HEK293 (cell line): ENCODE measurements at regions of chr2 and their contacts with region 1.

Region 1: DNA sequence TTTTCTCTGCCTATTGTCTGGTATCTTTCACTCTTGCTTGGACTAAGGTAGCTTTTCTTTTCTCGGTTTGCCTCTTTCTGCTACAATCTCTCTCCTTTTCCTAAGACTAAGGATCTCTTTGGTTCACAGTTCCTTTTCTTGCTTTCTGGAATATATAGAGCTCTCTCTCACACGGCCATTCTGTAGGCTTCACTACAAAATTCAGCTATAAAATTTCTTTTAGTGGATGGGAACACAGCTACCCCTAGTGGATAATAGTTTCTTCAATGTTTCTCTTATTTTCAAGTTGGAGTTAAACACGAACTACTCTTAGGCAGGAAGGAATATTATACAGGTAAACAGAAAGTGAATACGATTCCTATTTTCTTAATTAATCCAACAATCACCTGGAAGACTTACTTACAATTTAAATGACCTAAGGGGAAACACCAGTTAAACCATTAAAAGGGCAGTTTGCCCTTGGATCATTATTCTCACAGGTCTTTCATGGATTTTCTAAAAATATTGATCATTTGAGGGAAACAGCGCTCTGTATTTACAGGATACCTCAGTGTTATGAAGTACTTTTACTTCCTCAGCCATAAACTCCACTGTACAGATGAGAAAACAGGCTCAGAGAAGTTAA is 140.5 kb downstream of the LRP2 start:
- H3K4me3 ChIP-seq: no peak overlapping the region
- H3K27ac ChIP-seq: no peak overlapping the region
- H3K4me1 ChIP-seq: no peaks in the 10 kb centered on the region
- CTCF ChIP-seq: peak; percentile 26; the same call in 1 of the 2 replicates

Region 2: GRCh38 chr2:168490015-168490874 is 731.6 kb before region 1 on chr2:
- CTCF ChIA-PET with region 1: no interaction called
- POLR2A ChIA-PET with region 1: no interaction called
- H3K4me3 ChIP-seq: no peak overlapping the region
- H3K27ac ChIP-seq: no peak overlapping the region
- H3K4me1 ChIP-seq: peaks cover 3% of the 10 kb centered on the region; the same call in 1 of the 2 replicates
- CTCF ChIP-seq: no peak

Region 3: GRCh38 chr2:169208026-169208425 is 13.8 kb before region 1 on chr2:
- CTCF ChIA-PET with region 1: interaction called, 29 read pairs
- POLR2A ChIA-PET with region 1: no interaction called
- H3K4me3 ChIP-seq: no peak overlapping the region
- H3K27ac ChIP-seq: no peak overlapping the region
- H3K4me1 ChIP-seq: no peaks in the 10 kb centered on the region
- CTCF ChIP-seq: no peak

Region 4: DNA sequence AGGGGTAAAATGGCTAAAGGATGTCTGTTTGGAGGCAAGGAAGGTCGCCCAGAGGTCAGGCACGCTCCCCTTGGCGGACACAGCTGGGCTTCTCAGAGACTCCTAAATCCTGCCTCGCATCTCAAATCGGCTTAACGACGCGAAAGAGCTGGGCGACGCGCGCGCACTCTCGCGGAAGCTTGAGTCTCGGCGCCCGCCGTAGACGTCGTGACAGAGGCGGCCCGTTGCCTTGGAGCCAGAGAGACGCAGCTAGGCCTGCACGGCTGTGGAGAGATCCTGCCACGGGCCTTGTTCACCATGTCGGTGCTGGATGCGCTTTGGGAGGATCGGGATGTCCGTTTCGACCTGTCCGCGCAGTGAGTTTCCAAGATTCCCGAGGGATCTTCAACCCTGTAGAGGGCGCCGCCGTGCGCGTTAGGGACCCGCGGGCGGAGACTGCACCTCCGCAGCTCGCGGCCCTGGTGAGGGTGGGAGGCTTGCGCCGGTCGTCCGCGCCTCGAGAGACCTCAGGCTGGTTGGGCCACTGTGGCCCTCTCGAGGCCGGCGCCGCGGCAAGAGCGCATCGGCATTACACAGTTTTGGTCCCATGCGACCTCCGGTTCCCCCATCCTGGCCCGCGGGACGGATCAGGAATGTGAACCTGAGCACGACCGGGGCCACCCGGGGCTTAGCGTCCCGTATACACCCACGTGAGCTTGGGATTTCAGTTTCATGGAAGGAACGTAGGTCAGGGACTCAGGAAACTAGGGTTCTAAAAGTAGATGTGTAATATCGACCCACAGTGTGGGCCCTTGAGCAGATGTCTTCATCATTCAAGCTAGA is 257.6 kb after region 1 on chr2 and contains the start of gene BBS5:
- CTCF ChIA-PET with region 1: no interaction called
- POLR2A ChIA-PET with region 1: no interaction called
- H3K4me3 ChIP-seq: peak within 1 kb of the TSS; percentile 64
- H3K27ac ChIP-seq: peak within 1 kb of the TSS; percentile 1; the same call in 1 of the 2 replicates
- H3K4me1 ChIP-seq: no peaks in the 10 kb centered on the region
- CTCF ChIP-seq: peak; percentile 96